ENCODE measurements at regions of chr2 and their contacts with region 1.

Region 1: GRCh38 chr2:187875261-187876141 is 321.3 kb upstream of the TFPI start:
- DNase-seq: peak; percentile 83
- H3K4me3 ChIP-seq: no peak overlapping the region
- H3K27ac ChIP-seq: peak overlapping the region; percentile 40
- H3K4me1 ChIP-seq: peaks cover 37% of the 10 kb centered on the region
- H3K27me3 ChIP-seq: no peaks in the 10 kb centered on the region
- CTCF ChIP-seq: no peak
- POLR2A ChIP-seq: peak; percentile 16

Region 2: DNA sequence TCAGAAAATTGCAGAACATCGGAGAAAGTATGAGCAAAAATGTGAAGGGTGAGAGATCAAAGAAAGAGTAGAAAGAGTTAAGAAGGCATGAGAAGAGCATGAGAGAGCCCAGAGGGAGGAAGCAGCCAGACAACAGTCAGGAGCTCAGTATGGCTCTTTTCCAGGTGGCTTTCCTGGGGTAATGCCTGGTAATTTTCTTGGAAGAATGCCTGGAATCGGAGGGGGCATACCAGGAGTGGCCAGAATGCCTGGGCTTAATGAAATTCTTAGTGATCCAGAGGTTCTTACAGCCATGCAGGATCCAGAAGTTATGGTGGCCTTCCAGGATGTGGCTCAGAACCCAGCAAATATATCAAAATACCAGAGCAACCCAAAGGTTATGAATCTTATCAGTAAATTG is 49.5 kb before region 1 on chr2:
- CTCF ChIA-PET with region 1: no interaction called
- POLR2A ChIA-PET with region 1: no interaction called
- dilution Hi-C with region 1: no loop called
- intact Hi-C with region 1: no loop called
- DNase-seq: peak; percentile 16
- H3K4me3 ChIP-seq: no peak overlapping the region
- H3K27ac ChIP-seq: no peak overlapping the region
- H3K4me1 ChIP-seq: no peaks in the 10 kb centered on the region
- H3K27me3 ChIP-seq: no peaks in the 10 kb centered on the region
- CTCF ChIP-seq: no peak
- POLR2A ChIP-seq: no peak

Region 3: DNA sequence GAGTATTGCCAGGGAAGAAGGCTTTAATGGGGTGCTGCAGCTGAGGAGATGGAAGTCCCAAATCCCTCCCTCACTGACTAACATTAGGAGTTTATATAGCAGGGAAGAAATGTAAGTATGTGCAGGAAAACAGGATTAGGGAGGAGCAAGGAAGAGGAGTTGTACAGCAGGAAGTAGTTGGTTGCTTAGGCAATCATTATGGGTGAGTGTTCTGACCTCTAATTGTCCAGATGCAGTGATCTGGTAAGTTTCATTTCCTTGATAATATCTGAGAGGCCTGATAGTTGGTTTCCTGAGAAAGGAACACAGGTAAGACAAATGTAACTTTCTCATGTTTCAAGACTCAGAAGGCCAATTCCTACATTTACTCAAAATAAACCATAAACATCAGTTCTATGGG is 84.3 kb after region 1 on chr2:
- CTCF ChIA-PET with region 1: no interaction called
- POLR2A ChIA-PET with region 1: no interaction called
- dilution Hi-C with region 1: no loop called
- intact Hi-C with region 1: loop called (anchors 5 kb)
- DNase-seq: no peak
- H3K4me3 ChIP-seq: no peak overlapping the region
- H3K27ac ChIP-seq: no peak overlapping the region
- H3K4me1 ChIP-seq: peaks cover 8% of the 10 kb centered on the region
- H3K27me3 ChIP-seq: no peaks in the 10 kb centered on the region
- CTCF ChIP-seq: no peak
- POLR2A ChIP-seq: no peak

Region 4: GRCh38 chr2:188322569-188323551 is 447.4 kb after region 1 on chr2:
- CTCF ChIA-PET with region 1: no interaction called
- POLR2A ChIA-PET with region 1: no interaction called
- dilution Hi-C with region 1: no loop called
- intact Hi-C with region 1: loop called (anchors 5 kb)
- DNase-seq: peak; percentile 60
- H3K4me3 ChIP-seq: no peak overlapping the region
- H3K27ac ChIP-seq: peak overlapping the region; percentile 50
- H3K4me1 ChIP-seq: peaks cover 65% of the 10 kb centered on the region
- H3K27me3 ChIP-seq: no peaks in the 10 kb centered on the region
- CTCF ChIP-seq: no peak
- POLR2A ChIP-seq: no peak